ENCODE measurements at regions of chr17 and their contacts with region 1.

Region 1: GRCh38 chr17:56779898-56780733 is 53.6 kb downstream of the C17orf67 start:
- DNase-seq: peak; percentile 36 to 95
- H3K4me3 ChIP-seq: peak overlapping the region in 3 of 4 experiments; percentile 11 to 48 (median 30); a peak in 4 of 8 replicates
- H3K27ac ChIP-seq: no peak overlapping the region
- H3K4me1 ChIP-seq: peaks cover 0 to 3% (median under 1%) of the 10 kb centered on the region in 4 experiments; a peak in 4 of 7 replicates
- H3K27me3 ChIP-seq: peaks cover 0 to 22% (median 13%) of the 10 kb centered on the region in 4 experiments; a peak in 5 of 7 replicates
- CTCF ChIP-seq: peak; percentile 86 to 89 (median 88)
- EP300 ChIP-seq: no peak
- POLR2A ChIP-seq: no peak
- RAD21 ChIP-seq: peak; percentile 90 to 93

Region 2: DNA sequence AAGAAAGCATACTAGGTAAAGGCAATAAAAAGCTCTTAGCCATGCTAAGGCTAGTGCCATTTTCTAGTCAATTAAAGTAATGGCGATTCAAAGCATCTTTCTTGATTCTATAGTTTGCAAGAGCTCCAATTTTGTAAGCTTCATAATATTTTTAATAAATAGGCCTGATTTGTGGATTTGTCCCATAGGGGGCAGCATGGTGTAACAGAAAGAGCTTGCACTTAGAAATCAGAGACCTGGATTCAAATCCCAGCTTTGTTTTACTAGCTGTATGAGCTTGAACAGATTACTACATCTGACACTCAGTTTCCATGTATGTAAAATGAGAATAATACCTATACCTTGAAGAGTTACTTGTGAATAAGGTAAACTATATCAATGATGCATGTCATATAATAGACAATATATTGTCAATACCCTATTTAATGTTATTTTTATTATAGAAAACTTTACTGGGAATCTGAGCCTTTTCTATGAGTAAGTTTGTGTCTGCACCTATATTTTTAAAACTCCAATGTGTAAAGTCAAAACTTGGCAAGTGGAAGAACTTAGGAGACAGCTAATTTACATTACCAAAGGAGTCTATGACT is 280.2 kb before region 1 on chr17:
- CTCF ChIA-PET with region 1: interaction called, 17 read pairs
- POLR2A ChIA-PET with region 1: no interaction called
- DNase-seq: no peak
- H3K4me3 ChIP-seq: no peak overlapping the region
- H3K27ac ChIP-seq: no peak overlapping the region
- H3K4me1 ChIP-seq: no peaks in the 10 kb centered on the region
- H3K27me3 ChIP-seq: no peaks in the 10 kb centered on the region
- CTCF ChIP-seq: peak in 2 of 3 experiments; percentile 39 to 56; a peak in 2 of 4 replicates
- EP300 ChIP-seq: no peak
- POLR2A ChIP-seq: no peak
- RAD21 ChIP-seq: peak; percentile 76 to 80

Region 3: DNA sequence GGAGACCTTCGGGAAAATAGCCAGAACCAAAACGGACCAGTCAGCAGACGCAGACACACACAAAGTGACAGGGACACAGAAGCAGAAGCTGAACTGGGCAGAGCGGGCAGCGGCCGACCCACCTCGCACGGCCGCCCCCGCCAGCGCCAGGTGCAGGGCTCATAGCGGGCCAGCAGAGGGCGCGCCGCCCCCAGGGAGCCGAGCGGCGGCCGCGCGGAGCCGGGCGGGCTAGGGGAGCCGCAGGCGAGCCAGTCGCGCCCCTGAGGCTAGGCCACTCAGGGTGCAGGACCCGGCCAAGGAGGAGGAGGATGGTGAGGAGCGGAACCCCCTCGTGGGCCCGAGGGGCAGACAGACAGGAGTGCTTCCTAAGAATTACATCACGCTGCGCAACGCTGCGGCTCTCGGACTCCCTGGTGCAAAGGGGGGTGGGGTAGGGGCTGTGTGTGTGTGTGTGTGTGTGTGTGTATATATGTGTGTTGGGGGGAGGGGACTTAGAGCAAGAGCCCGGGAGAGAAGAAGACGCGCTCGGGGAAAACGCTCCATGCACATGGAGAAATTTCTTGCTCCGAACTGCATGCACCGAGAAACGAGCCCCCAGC is 187.5 kb before region 1 on chr17:
- CTCF ChIA-PET with region 1: interaction called, 21 read pairs
- POLR2A ChIA-PET with region 1: no interaction called
- DNase-seq: peak in 1 of 2 experiments; percentile 93
- H3K4me3 ChIP-seq: peak overlapping the region; percentile 39 to 75 (median 66)
- H3K27ac ChIP-seq: no peak overlapping the region
- H3K4me1 ChIP-seq: peaks cover 0 to 11% (median 4%) of the 10 kb centered on the region in 4 experiments; a peak in 5 of 7 replicates
- H3K27me3 ChIP-seq: peaks cover 12 to 49% (median 36%) of the 10 kb centered on the region in 4 experiments
- CTCF ChIP-seq: peak; percentile 86 to 96 (median 87)
- EP300 ChIP-seq: 0 out of 3 replicates have a peak, but pooled peaks of 1 of the 2 experiments have one; percentile 20
- POLR2A ChIP-seq: no peak
- RAD21 ChIP-seq: peak; percentile 74 to 93

Region 4: DNA sequence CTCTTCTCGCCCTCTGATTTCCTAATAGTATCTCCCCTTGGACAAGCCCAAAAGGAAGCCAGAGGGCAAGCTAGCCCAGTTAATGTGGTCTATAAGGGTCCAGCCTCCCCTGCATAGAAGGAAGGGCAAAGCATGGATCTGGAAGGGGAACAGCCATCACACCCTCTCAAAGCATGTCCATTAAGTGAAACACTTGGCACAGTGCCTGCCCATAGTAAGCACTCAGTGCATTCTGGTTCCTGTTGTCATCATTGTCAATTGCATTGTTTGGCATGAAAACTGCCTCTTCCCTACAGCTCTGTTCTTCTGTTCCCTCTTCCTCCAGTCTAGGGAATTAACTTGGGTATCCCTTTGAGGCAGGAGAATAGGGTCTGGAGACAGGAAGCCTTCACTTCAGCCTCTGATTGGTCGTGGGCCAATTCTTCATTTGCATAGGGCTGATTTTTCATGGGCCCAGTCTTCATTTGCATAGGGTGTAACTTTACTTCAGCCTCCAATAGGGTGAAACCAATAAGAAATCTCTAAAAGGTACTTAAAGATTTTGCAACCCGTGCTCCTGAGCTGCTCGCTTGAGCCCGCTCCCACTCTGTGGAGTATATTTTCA is 27.8 kb before region 1 on chr17:
- CTCF ChIA-PET with region 1: interaction called, 17 read pairs
- POLR2A ChIA-PET with region 1: no interaction called
- DNase-seq: no peak
- H3K4me3 ChIP-seq: no peak overlapping the region
- H3K27ac ChIP-seq: no peak overlapping the region
- H3K4me1 ChIP-seq: peaks cover 0 to 3% (median 0%) of the 10 kb centered on the region in 4 experiments; a peak in 4 of 7 replicates
- H3K27me3 ChIP-seq: no peaks in the 10 kb centered on the region
- CTCF ChIP-seq: no peak
- EP300 ChIP-seq: no peak
- POLR2A ChIP-seq: no peak
- RAD21 ChIP-seq: no peak

Region 5: DNA sequence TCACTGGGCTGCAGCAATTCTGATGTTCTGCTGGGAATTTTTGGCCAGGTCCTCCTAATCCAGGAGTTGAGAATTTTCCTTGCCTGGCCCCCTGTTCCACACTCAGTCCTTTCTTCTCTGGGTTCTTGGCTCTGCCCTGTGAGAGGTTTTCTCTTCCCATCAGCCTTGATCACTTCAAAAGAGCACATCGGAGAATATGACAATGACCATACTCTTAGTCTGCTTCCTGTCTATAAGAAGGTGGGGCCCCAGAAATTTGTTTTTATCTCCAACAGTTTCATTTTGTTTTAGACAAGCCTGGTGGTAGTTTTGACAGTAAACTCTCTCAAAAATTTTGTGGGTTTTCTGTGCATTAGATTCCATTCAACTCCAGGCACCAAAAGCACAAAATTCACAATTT is 17.1 kb before region 1 on chr17:
- CTCF ChIA-PET with region 1: interaction called, 14 read pairs
- POLR2A ChIA-PET with region 1: no interaction called
- DNase-seq: no peak
- H3K4me3 ChIP-seq: no peak overlapping the region
- H3K27ac ChIP-seq: no peak overlapping the region
- H3K4me1 ChIP-seq: no peaks in the 10 kb centered on the region
- H3K27me3 ChIP-seq: no peaks in the 10 kb centered on the region; a peak in 1 of 7 replicates
- CTCF ChIP-seq: no peak
- EP300 ChIP-seq: no peak
- POLR2A ChIP-seq: no peak
- RAD21 ChIP-seq: no peak

Region 6: DNA sequence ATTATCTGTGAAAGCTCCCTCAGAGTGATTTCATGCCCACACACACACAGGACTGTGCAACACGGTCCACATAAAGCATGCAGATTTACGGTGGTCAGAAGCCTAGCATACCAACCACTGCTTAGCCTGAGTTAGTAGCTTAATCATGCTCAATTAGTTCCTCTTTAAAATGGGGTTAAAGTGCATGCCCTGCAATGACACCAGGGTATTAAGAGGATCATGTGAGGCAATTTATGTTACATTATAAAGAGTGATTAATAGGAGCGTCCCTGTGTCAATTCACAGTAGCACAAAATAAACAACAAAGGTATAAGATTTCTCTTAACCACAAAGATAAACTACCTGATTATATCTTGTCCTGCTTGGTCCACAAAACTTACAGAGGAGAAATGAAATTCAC is 13.8 kb after region 1 on chr17:
- CTCF ChIA-PET with region 1: interaction called, 31 read pairs
- POLR2A ChIA-PET with region 1: no interaction called
- DNase-seq: no peak
- H3K4me3 ChIP-seq: no peak overlapping the region
- H3K27ac ChIP-seq: no peak overlapping the region
- H3K4me1 ChIP-seq: peaks cover 0 to under 1% (median 0%) of the 10 kb centered on the region in 4 experiments; a peak in 3 of 7 replicates
- H3K27me3 ChIP-seq: no peaks in the 10 kb centered on the region; a peak in 1 of 7 replicates
- CTCF ChIP-seq: no peak
- EP300 ChIP-seq: no peak
- POLR2A ChIP-seq: no peak
- RAD21 ChIP-seq: no peak

Measured in H1 (cell line).